ENCODE measurements at regions of chr20 and their contacts with region 1.

Region 1: DNA sequence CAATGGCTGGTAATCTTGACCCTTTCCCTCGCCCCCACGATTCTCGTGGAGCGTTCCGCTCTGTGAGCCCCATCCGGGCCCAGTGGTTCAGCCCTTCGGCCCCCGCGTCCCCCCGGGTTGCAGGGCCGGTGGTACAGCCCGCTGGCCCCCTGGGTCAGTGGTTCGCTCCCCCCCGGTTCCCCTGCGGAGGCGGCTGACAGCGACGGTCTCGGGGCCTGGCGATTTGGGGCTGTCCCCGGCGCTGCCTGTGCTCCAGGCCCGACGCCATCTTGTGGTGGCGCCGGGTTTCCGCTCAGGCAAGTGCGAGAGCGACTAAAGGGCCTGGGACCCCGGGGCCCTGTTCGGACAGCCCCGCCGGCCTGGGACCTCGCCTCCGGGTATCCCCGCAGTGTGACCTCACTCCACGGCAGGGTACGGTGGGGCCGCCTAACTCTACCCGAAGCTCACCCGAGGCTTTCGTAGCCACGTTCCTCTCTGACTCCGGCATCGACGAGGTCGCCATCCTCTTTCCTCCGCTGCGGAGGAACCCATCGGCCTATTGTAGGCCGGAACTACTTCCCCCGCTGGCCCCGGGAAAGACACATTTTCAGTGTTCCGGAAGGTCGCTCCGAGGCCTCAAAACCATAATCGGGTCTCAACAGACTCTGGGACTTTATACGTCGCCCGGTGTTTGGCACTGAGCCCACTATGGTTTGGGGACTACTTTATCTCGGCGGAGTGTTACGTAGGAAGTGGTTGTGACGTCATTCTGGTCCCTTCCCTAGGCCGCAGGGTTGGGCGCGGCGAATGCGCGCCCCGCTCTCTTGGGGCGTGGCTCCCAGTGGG is at the start of gene ZNF335:
- DNase-seq: peak; percentile 98
- H3K4me3 ChIP-seq: peak within 1 kb of the TSS; percentile 80 to 96 (median 88)
- H3K27ac ChIP-seq: peak within 1 kb of the TSS; percentile 97 to 99 (median 98)
- H3K4me1 ChIP-seq: peaks cover 15 to 39% (median 37%) of the 10 kb centered on the region in 4 donors
- H3K27me3 ChIP-seq: no peaks in the 10 kb centered on the region
- CTCF ChIP-seq: peak; percentile 41 to 49 (median 44)
- EP300 ChIP-seq: no peak
- POLR2A ChIP-seq: peak; percentile 71
- total RNA-seq, gene ZNF335: 12.9 to 19.0 (median 15.3) TPM

Region 2: DNA sequence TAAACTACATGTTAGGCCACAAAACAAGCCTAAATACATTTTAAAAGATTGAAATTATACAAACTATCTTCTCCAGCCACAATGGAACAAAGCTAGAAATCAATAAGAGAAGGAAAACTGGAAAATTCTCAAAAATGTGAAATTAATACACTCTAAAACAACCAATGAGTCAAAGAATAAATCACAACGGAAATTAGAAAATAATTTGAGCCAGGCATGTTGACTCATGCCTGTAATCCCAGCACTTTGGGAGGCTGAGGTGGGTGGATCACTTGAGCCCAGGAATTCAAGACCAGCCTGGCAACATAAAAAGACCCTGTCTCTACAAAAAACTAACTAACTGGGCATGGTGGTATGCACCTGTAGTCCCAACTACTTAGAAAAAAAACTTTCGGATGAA is 276.4 kb before region 1 on chr20:
- intact Hi-C with region 1: no loop called
- DNase-seq: no peak
- H3K4me3 ChIP-seq: no peak overlapping the region
- H3K27ac ChIP-seq: no peak overlapping the region
- H3K4me1 ChIP-seq: no peaks in the 10 kb centered on the region
- H3K27me3 ChIP-seq: no peaks in the 10 kb centered on the region
- CTCF ChIP-seq: no peak
- EP300 ChIP-seq: no peak
- POLR2A ChIP-seq: no peak

Region 3: GRCh38 chr20:45812157-45813020 is 159.5 kb before region 1 on chr20 and contains the start of gene UBE2C:
- intact Hi-C with region 1: loop called (anchors 5 kb)
- DNase-seq: peak; percentile 99
- H3K4me3 ChIP-seq: peak within 1 kb of the TSS; percentile 54 to 64 (median 56)
- H3K27ac ChIP-seq: peak within 1 kb of the TSS; percentile 33 to 61 (median 47)
- H3K4me1 ChIP-seq: peaks cover 5 to 23% (median 20%) of the 10 kb centered on the region in 4 donors
- H3K27me3 ChIP-seq: no peaks in the 10 kb centered on the region
- CTCF ChIP-seq: no peak
- EP300 ChIP-seq: no peak
- POLR2A ChIP-seq: no peak
- total RNA-seq, gene UBE2C: 0.83 to 2.7 (median 0.91) TPM in 3 of 4 donors, not detected in the other

Region 4: DNA sequence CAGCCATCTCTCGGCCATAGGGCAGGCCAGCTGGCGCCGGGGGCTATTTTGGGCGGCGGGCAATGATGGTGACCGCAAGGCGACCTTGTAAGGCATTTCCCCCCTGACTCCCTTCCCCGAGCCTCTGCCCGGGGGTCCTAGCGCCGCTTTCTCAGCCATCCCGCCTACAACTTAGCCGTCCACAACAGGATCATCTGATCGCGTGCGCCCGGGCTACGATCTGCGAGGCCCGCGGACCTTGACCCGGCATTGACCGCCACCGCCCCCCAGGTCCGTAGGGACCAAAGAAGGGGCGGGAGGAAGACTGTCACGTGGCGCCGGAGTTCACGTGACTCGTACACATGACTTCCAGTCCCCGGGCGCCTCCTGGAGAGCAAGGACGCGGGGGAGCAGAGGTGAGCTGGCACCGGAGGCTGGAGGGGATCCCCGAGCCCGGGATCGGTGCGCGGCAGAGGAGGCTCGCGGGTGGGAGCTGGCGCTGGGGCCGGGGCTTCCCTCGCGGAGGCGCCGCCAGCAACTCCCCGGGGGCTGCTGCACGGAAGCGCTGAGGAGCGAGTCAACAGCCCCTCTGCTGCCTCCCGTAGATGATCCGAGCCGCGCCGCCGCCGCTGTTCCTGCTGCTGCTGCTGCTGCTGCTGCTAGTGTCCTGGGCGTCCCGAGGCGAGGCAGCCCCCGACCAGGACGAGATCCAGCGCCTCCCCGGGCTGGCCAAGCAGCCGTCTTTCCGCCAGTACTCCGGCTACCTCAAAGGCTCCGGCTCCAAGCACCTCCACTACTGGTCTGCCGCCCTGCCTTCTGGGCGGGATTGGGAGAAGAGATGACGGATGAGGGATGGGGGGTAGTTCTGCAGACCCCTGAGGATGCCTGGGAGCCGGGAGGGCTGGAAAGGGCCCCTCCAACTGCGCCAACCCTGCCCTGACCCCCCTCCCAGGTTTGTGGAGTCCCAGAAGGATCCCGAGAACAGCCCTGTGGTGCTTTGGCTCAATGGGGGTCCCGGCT is 80.6 kb before region 1 on chr20 and contains the starts of genes CTSA and NEURL2:
- intact Hi-C with region 1: loop called (anchors 5 kb)
- DNase-seq: peak; percentile 98
- H3K4me3 ChIP-seq: peak within 1 kb of the TSS; percentile 70 to 93 (median 88)
- H3K27ac ChIP-seq: peak within 1 kb of the TSS; percentile 84 to 94 (median 90)
- H3K4me1 ChIP-seq: peaks cover 24 to 48% (median 34%) of the 10 kb centered on the region in 4 donors
- H3K27me3 ChIP-seq: no peaks in the 10 kb centered on the region
- CTCF ChIP-seq: peak in 2 of 3 experiments; percentile 18 to 32
- EP300 ChIP-seq: no peak
- POLR2A ChIP-seq: peak; percentile 69
- total RNA-seq, gene CTSA: 44.8 to 70.2 (median 48.3) TPM
- total RNA-seq, gene NEURL2: 10.8 to 16.1 (median 13.0) TPM

Region 5: GRCh38 chr20:46089417-46090388 is 117.8 kb after region 1 on chr20 and contains the start of gene NCOA5:
- intact Hi-C with region 1: loop called (anchors 5 kb)
- DNase-seq: peak; percentile 98
- H3K4me3 ChIP-seq: peak within 1 kb of the TSS; percentile 60 to 89 (median 86)
- H3K27ac ChIP-seq: peak within 1 kb of the TSS; percentile 94 to 99 (median 98)
- H3K4me1 ChIP-seq: peaks cover 40 to 51% (median 49%) of the 10 kb centered on the region in 4 donors
- H3K27me3 ChIP-seq: no peaks in the 10 kb centered on the region
- CTCF ChIP-seq: peak; percentile 17 to 47 (median 24)
- EP300 ChIP-seq: no peak
- POLR2A ChIP-seq: peak; percentile 76
- total RNA-seq, gene NCOA5: 17.4 to 36.8 (median 29.9) TPM